ENCODE measurements at regions of chr10 and their contacts with region 1.

Region 1: DNA sequence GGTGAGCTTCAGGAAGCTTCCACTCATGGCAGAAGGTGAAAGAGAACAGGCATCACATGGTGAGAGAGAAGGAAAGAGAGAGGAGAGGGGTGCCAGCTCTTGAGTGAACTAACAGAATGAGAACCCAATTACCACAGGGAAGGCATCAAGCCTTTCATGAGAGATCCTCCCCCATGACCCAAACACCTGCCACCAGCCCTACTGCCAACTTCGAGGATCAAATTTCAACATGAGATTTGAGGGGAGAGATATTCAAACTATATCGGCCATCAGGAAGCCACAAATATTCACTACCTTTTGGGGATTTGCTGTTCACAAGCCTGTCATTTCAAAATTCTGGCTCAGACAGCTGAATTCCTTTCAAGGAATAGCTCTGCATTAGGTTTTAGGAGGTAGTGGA is 39.9 kb upstream of the SMNDC1 start:
- DNase-seq: no peak
- H3K4me3 ChIP-seq: no peak overlapping the region
- H3K27ac ChIP-seq: no peak overlapping the region
- H3K4me1 ChIP-seq: no peaks in the 10 kb centered on the region
- H3K27me3 ChIP-seq: peaks cover 0 to 8% (median 0%) of the 10 kb centered on the region in 4 donors
- CTCF ChIP-seq: no peak
- POLR2A ChIP-seq: no peak

Region 2: DNA sequence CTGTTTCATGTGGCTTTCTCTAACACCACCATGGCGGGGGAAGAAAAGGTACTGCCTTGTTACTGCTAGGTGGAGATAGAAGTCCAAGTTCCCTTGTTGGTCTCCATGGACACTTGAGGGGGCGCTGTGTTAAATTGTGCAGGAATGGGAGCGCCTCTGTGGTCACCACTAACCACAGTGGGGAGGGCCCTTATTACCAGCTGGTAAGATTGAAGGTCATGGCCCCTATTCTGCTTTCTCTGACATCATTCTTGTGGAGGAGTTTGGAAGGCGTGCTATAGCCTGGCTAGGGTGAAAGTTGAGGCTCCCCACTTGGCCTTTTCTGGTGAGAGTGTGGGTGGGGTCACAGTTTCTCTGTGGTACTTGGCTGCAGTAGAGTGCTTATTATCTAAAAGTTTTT is 152.1 kb before region 1 on chr10:
- intact Hi-C with region 1: no loop called
- DNase-seq: no peak
- H3K4me3 ChIP-seq: no peak overlapping the region
- H3K27ac ChIP-seq: no peak overlapping the region
- H3K4me1 ChIP-seq: peaks cover 0 to 4% (median 2%) of the 10 kb centered on the region in 3 donors
- H3K27me3 ChIP-seq: peaks cover 0 to 12% (median 0%) of the 10 kb centered on the region in 4 donors
- CTCF ChIP-seq: no peak
- POLR2A ChIP-seq: no peak

Region 3: GRCh38 chr10:110269374-110270318 is 75.0 kb before region 1 on chr10:
- intact Hi-C with region 1: no loop called
- DNase-seq: no peak
- H3K4me3 ChIP-seq: peak overlapping the region in 2 of 4 donors; percentile 18 to 49
- H3K27ac ChIP-seq: peak overlapping the region in 3 of 4 donors; percentile 72 to 77 (median 74)
- H3K4me1 ChIP-seq: peaks cover 0 to 41% (median 14%) of the 10 kb centered on the region in 3 donors
- H3K27me3 ChIP-seq: no peaks in the 10 kb centered on the region
- CTCF ChIP-seq: no peak
- POLR2A ChIP-seq: no peak

Region 4: GRCh38 chr10:110556969-110557601 is 212.5 kb after region 1 on chr10:
- intact Hi-C with region 1: loop called (anchors 10 kb)
- DNase-seq: no peak
- H3K4me3 ChIP-seq: no peak overlapping the region
- H3K27ac ChIP-seq: no peak overlapping the region
- H3K4me1 ChIP-seq: no peaks in the 10 kb centered on the region
- H3K27me3 ChIP-seq: peaks cover 0 to 11% (median 0%) of the 10 kb centered on the region in 4 donors
- CTCF ChIP-seq: peak; percentile 34 to 60 (median 44)
- POLR2A ChIP-seq: no peak